ENCODE measurements at regions of chr5 and their contacts with region 1.

Region 1: GRCh38 chr5:16666883-16667398 is 50.1 kb upstream of the RETREG1 start:
- DNase-seq: peak in 40 of 42 donors; percentile 28 to 85 (median 65)

Region 2: DNA sequence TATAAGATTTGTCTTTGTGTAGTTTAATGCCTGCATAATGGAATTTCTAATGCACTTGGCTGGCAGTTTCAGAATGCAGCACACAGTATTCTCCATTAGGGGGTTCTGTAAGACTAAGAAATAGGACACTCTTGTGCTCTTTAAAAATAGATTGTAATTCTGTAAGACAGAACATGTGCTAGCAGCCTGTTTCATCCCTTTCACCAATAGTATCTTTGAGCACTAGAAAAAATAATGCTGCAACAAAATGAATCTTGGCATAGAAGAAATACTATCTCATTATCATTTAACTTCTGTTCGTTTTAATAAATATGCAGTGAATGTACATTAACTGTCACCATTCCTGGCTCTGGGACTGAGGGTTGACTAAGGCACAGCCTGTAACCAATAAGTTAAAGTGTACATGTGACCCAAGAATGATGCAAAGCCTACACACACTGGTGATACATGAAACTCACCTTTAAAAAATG is 177.6 kb before region 1 on chr5:
- intact Hi-C with region 1: loop called (anchors 10 kb)
- DNase-seq: peak in 17 of 42 donors; percentile 27 to 74 (median 48)

Region 3: GRCh38 chr5:16500024-16500423 is 166.9 kb before region 1 on chr5:
- intact Hi-C with region 1: no loop called
- DNase-seq: no peak

Region 4: GRCh38 chr5:16568875-16569580 is 97.9 kb before region 1 on chr5:
- intact Hi-C with region 1: loop called (anchors 10 kb)
- DNase-seq: peak; percentile 82 to 98 (median 94)